ENCODE measurements at regions of chrX and their contacts with region 1.

Region 1: GRCh38 chrX:49122499-49122898 is 1.0 kb downstream of the GPKOW start:
- DNase-seq: no peak
- ATAC-seq: no peak

Region 2: GRCh38 chrX:49155900-49156837 is 33.7 kb after region 1 on chrX:
- intact Hi-C with region 1: loop called (anchors 2 kb)
- DNase-seq: peak; percentile 95
- ATAC-seq: peak; percentile 96

Region 3: DNA sequence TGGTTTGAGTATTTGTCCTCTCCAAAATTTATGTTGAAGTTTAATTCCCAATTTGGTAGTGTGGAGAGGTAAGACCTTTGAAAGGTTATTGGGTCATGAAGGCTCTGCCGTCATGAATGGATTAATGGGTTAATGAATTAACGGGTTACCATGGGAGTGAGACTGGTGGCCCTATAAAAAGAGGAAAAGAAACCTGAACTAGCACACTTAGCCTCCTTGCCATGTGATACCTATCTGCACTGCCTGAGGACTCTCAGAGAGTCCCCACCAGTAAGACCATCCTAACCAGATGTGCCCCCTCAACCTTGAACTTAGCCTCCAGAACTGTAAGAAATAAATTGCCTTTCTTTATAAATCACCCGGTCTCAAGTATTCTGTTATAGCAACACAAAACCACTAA is 534.0 kb after region 1 on chrX:
- intact Hi-C with region 1: no loop called
- DNase-seq: no peak
- ATAC-seq: no peak

Measured in Right ventricle myocardium inferior (tissue), 1 donor.